ENCODE measurements at regions of chr19 and their contacts with region 1.

Region 1: GRCh38 chr19:36214386-36215275 is at the starts of genes ZNF146 and ZNF565:
- DNase-seq: peak; percentile 87 to 97 (median 96)
- ATAC-seq: peak; percentile 94
- H3K4me3 ChIP-seq: peak within 1 kb of the TSS; percentile 97
- H3K4me3 Mint-ChIP-seq: no peak within 1 kb of the TSS
- H3K27ac ChIP-seq: peak within 1 kb of the TSS; percentile 94
- H3K27ac Mint-ChIP-seq: peak within 1 kb of the TSS in 2 of 9 donors; percentile 38 to 41
- H3K4me1 ChIP-seq: peaks cover 14 to 19% of the 10 kb centered on the region in 2 donors
- H3K4me1 Mint-ChIP-seq: peaks cover 13 to 28% (median 25%) of the 10 kb centered on the region in 7 donors
- H3K27me3 ChIP-seq: no peaks in the 10 kb centered on the region
- H3K27me3 Mint-ChIP-seq: no peaks in the 10 kb centered on the region
- total RNA-seq, gene ZNF146: 27.7 to 77.4 (median 57.7) TPM
- total RNA-seq, gene ZNF565: 2.7 to 11.6 (median 7.8) TPM

Region 2: DNA sequence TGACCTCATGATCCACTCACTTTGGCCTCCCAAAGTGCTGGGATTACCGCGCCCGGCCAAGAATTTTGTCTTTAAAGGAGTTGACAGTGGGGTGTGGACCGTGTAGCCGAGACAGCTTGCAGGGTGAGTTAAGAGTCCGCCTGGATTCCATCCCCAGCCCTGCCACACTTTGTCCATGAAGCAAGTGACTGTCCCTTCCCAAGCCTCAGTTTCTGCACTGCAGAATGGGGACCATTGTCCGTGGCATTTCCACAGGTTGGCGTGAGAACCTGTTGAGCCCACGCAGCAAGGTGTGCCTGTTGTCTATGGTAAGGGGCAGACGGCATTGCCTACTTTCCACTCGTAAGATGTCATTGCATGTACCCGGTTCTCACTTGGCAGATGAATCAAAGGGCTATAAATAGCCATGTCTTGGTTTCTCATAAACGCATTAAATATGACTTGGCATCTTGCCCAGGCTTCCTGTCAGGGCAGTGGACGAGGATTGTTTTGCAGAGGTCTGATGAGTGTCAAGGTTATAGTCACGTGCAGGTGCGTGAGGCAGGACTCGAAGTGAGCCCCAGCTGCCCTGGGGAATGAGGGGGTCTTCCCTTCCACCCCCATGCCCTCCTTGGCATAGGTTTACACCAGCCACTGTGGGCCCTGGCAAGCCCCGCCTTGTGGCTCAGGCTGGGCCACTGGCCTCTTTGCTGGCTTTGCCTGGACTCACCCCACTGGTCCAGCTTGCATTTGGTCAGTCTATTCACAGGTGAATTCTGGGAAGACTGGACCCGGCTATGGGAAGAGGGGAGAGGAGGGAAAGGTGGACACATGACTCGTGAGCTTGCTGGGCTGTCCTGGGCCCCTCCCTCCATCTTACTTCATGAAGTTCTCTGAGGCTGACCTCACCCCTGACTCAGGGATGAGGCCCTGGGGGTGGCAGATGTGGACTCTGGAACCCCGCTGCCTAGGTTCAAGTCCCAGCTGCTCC is 1000.7 kb before region 1 on chr19:
- CTCF ChIA-PET with region 1: no interaction called
- POLR2A ChIA-PET with region 1: no interaction called
- intact Hi-C with region 1: no loop called
- DNase-seq: peak; percentile 35 to 97 (median 90)
- ATAC-seq: peak; percentile 49
- H3K4me3 ChIP-seq: peak overlapping the region; percentile 24
- H3K4me3 Mint-ChIP-seq: peak overlapping the region; percentile 31 to 91 (median 71)
- H3K27ac ChIP-seq: peak overlapping the region; percentile 91
- H3K27ac Mint-ChIP-seq: peak overlapping the region; percentile 98 to 100 (median 100)
- H3K4me1 ChIP-seq: peaks cover 47 to 52% of the 10 kb centered on the region in 2 donors
- H3K4me1 Mint-ChIP-seq: peaks cover 41 to 81% (median 70%) of the 10 kb centered on the region in 7 donors
- H3K27me3 ChIP-seq: no peaks in the 10 kb centered on the region
- H3K27me3 Mint-ChIP-seq: no peaks in the 10 kb centered on the region

Region 3: GRCh38 chr19:35995048-35995993 is 219.3 kb before region 1 on chr19 and contains the start of gene SDHAF1:
- CTCF ChIA-PET with region 1: no interaction called
- POLR2A ChIA-PET with region 1: interaction called, 3 read pairs
- intact Hi-C with region 1: loop called in 1 of 2 experiments (anchors 5 kb)
- DNase-seq: peak; percentile 77 to 94 (median 87)
- ATAC-seq: peak; percentile 96
- H3K4me3 ChIP-seq: peak within 1 kb of the TSS; percentile 84
- H3K4me3 Mint-ChIP-seq: peak within 1 kb of the TSS; percentile 89 to 99 (median 96)
- H3K27ac ChIP-seq: peak within 1 kb of the TSS; percentile 74
- H3K27ac Mint-ChIP-seq: peak within 1 kb of the TSS; percentile 90 to 97 (median 95)
- H3K4me1 ChIP-seq: peaks cover 11 to 16% of the 10 kb centered on the region in 2 donors
- H3K4me1 Mint-ChIP-seq: peaks cover 22 to 44% (median 33%) of the 10 kb centered on the region in 7 donors
- H3K27me3 ChIP-seq: no peaks in the 10 kb centered on the region
- H3K27me3 Mint-ChIP-seq: no peaks in the 10 kb centered on the region
- total RNA-seq, gene SDHAF1: 7.8 to 26.1 (median 17.8) TPM

Region 4: DNA sequence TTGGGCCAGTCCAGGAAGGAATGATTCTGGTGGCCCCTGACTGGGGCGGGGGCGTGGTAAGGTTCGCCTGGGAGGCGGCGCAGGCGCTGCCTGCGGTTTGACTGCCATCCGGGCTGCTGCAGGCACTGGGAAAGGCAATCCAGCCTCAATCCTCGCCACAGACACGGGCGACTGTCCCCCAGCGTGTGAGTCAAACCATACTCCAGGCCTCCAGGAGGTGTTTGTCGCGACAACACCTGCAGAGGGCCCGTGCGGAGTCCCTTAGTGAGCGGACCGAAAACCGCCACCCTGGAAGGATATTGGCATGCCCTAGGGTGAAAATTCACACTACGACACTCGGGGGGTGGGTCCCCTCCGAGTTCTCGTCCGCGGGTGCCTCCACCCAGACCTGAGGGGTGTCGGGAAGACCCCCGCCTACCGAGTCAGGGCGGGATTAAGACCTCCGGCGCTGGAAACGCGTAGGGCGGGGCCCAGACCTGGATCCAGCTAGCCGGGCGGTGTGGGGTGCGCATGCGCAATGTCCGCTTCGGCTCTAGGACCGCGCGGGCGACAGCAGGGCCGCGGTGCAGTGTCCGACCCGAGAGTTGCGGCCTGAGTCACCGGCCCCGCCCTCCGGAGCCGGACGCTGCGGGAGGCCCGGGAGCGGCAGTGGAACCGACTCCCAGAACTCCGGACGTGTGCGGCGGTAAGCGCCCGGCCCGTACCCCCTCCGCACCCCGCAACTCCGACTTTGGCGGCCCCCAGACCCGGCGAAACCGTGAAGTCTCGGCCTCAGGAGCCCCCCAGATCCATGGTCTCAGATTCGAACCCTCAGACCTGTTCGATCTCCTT is 74.9 kb before region 1 on chr19 and contains the start of gene CAPNS1:
- CTCF ChIA-PET with region 1: no interaction called
- POLR2A ChIA-PET with region 1: interaction called, 8 read pairs
- intact Hi-C with region 1: loop called (anchors 1 kb)
- DNase-seq: peak; percentile 82 to 95 (median 86)
- ATAC-seq: peak; percentile 83
- H3K4me3 ChIP-seq: peak within 1 kb of the TSS; percentile 99
- H3K4me3 Mint-ChIP-seq: peak within 1 kb of the TSS; percentile 91 to 98 (median 95)
- H3K27ac ChIP-seq: peak within 1 kb of the TSS; percentile 87
- H3K27ac Mint-ChIP-seq: peak within 1 kb of the TSS; percentile 85 to 97 (median 91)
- H3K4me1 ChIP-seq: peaks cover 6 to 9% of the 10 kb centered on the region in 2 donors
- H3K4me1 Mint-ChIP-seq: peaks cover 10 to 25% (median 15%) of the 10 kb centered on the region in 7 donors
- H3K27me3 ChIP-seq: no peaks in the 10 kb centered on the region
- H3K27me3 Mint-ChIP-seq: no peaks in the 10 kb centered on the region
- total RNA-seq, gene CAPNS1: 197 to 473 (median 207) TPM

Region 5: DNA sequence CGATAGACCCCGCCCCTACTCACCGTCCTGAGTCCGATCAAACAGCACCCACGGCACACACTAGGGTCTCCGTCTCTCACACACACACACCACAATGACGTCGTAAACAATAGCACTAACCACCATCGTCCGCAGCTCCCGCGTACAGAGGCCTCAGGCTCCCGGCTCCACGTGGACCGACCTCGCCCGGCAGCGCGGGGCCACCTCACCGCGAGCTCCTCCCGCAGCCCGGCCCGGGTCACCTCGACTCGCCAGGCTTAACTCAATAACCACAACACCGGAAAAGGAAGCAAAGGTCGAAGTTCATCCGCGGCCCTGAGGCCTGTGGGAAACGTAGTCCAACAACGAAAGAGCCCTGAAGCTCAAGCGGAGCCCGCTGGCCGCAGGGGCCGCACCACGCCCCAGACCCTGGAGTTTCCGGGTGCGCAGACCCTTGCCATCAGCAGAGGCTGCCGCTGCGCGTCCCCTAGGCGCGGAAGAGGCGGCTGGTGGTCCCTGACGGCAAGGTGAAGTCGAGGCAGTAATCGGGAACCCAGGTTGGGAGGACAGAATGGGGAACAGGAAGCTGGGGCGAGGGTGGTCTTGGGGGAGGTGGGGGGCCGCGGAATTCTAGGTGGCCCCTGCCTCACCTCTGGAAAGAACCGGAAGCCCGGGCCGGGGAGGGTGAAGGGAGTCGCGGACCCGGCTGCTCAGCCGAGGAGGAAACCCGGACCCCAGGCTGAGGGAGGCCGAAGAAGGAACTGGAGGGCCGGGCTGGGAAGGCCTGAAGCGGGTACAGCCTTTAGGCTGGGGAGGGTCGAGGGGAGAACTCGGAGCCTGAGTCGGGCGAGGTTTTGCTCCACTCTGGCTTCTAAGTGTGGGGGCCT is 358.6 kb after region 1 on chr19 and contains the start of gene ZNF529:
- CTCF ChIA-PET with region 1: no interaction called
- POLR2A ChIA-PET with region 1: no interaction called
- intact Hi-C with region 1: loop called in 1 of 2 experiments (anchors 1 kb)
- DNase-seq: peak; percentile 67 to 95 (median 85)
- ATAC-seq: peak; percentile 95
- H3K4me3 ChIP-seq: peak within 1 kb of the TSS; percentile 95
- H3K4me3 Mint-ChIP-seq: peak within 1 kb of the TSS; percentile 80 to 100 (median 93)
- H3K27ac ChIP-seq: peak within 1 kb of the TSS; percentile 98
- H3K27ac Mint-ChIP-seq: peak within 1 kb of the TSS; percentile 94 to 100 (median 98)
- H3K4me1 ChIP-seq: peaks cover 0 to 15% of the 10 kb centered on the region in 2 donors
- H3K4me1 Mint-ChIP-seq: peaks cover 23 to 46% (median 40%) of the 10 kb centered on the region in 7 donors
- H3K27me3 ChIP-seq: no peaks in the 10 kb centered on the region
- H3K27me3 Mint-ChIP-seq: no peaks in the 10 kb centered on the region
- total RNA-seq, gene ZNF529: 22.6 to 37.8 (median 33.8) TPM

Region 6: GRCh38 chr19:36837906-36838783 is 623.5 kb after region 1 on chr19 and contains the start of gene ZNF790:
- CTCF ChIA-PET with region 1: no interaction called
- POLR2A ChIA-PET with region 1: no interaction called
- intact Hi-C with region 1: loop called in 1 of 2 experiments (anchors 5 kb)
- DNase-seq: peak; percentile 68 to 91 (median 85)
- ATAC-seq: peak; percentile 95
- H3K4me3 ChIP-seq: peak within 1 kb of the TSS; percentile 92
- H3K4me3 Mint-ChIP-seq: peak within 1 kb of the TSS in 1 of 10 donors; percentile 22
- H3K27ac ChIP-seq: peak within 1 kb of the TSS; percentile 92
- H3K27ac Mint-ChIP-seq: peak within 1 kb of the TSS in 5 of 9 donors; percentile 39 to 65 (median 51)
- H3K4me1 ChIP-seq: peaks cover 6 to 11% of the 10 kb centered on the region in 2 donors
- H3K4me1 Mint-ChIP-seq: peaks cover 0 to 21% (median 14%) of the 10 kb centered on the region in 7 donors
- H3K27me3 ChIP-seq: no peaks in the 10 kb centered on the region
- H3K27me3 Mint-ChIP-seq: no peaks in the 10 kb centered on the region
- total RNA-seq, gene ZNF790: 2.6 to 14.4 (median 7.3) TPM

Region 7: DNA sequence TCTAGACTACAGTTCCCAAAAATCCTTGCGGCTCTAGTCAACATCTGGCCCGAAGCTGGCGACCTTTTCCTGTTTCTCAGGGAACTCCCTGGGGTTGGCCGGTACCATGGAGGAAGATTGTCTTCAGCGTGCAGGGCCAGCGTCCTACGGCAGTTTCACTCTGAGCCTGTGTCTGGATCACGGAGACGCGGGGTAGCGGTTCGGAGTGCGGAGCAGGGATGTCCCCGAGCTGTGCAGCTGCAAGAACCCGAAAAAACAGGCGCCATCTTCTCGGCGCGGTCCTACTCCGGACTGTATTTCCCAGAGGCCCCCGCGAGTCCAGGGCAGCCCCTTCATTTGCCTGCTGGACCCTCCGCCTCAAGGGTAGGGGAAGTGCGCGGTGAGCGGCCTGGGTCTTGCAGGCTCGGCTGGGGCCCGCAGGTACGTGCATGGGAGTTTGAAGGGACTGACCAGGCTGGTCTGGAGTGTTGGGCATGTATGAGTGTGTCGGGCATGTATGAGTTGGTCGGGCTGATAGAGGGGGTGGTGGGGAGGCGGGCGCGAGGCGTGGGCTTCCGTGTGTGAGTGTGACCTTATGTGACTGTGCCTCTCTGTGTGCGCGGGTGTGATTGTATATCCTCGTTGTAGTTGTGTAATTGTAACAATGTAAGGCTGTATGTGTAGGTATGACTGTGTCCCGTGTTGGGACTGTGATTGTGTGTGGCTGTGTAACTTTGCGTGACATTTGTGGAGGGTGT is 1003.4 kb after region 1 on chr19 and contains the start of gene ZNF383:
- CTCF ChIA-PET with region 1: interaction called, 6 read pairs
- POLR2A ChIA-PET with region 1: interaction called, 3 read pairs
- intact Hi-C with region 1: loop called in 1 of 2 experiments (anchors 1 kb)
- DNase-seq: peak; percentile 63 to 81 (median 78)
- ATAC-seq: peak; percentile 95
- H3K4me3 ChIP-seq: peak within 1 kb of the TSS; percentile 93
- H3K4me3 Mint-ChIP-seq: peak within 1 kb of the TSS; percentile 90 to 97 (median 92)
- H3K27ac ChIP-seq: peak within 1 kb of the TSS; percentile 94
- H3K27ac Mint-ChIP-seq: peak within 1 kb of the TSS; percentile 74 to 99 (median 91)
- H3K4me1 ChIP-seq: peaks cover 0 to 6% of the 10 kb centered on the region in 2 donors
- H3K4me1 Mint-ChIP-seq: peaks cover 21 to 33% (median 31%) of the 10 kb centered on the region in 7 donors
- H3K27me3 ChIP-seq: no peaks in the 10 kb centered on the region
- H3K27me3 Mint-ChIP-seq: no peaks in the 10 kb centered on the region
- total RNA-seq, gene ZNF383: 12.2 to 33.4 (median 21.2) TPM

Measured in naive thymus-derived CD4-positive, alpha-beta T cell (primary cell).